H1 (cell line): ENCODE measurements at regions of chr3 and their contacts with region 1.

Region 1: DNA sequence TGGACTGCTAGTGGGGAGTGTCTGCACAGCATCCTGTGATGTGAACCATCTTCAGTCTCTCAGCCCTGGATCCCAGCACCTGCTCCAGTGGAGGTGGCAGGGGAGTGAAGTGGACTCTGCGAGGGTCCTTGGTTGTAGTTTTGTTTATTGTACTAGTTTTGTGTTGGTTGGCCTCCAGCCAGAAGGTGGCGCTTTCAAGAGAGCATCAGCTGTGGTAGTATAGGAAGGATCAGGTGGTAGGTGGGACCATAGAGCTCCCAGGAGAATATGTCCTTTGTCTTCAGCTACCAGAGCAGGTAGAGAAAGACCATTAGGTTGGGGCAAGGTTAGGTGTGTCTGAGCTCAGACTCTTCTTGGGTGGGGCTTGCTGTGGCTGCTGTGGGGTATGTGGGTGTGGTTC is 20.9 kb downstream of the NEK11 start:
- DNase-seq: peak in 1 of 2 experiments; percentile 57
- H3K4me3 ChIP-seq: no peak overlapping the region
- H3K27ac ChIP-seq: no peak overlapping the region
- H3K4me1 ChIP-seq: peaks cover 0 to 1% (median 0%) of the 10 kb centered on the region in 4 experiments; a peak in 1 of 7 replicates
- H3K27me3 ChIP-seq: no peaks in the 10 kb centered on the region
- CTCF ChIP-seq: peak in 2 of 3 experiments; percentile 18 to 52; a peak in 2 of 4 replicates
- EP300 ChIP-seq: no peak
- POLR2A ChIP-seq: no peak
- RAD21 ChIP-seq: no peak; a peak in 1 of 4 replicates

Region 2: GRCh38 chr3:131033480-131034080 is 14.0 kb before region 1 on chr3:
- CTCF ChIA-PET with region 1: interaction called, 12 read pairs
- POLR2A ChIA-PET with region 1: no interaction called
- DNase-seq: no peak
- H3K4me3 ChIP-seq: no peak overlapping the region
- H3K27ac ChIP-seq: no peak overlapping the region
- H3K4me1 ChIP-seq: no peaks in the 10 kb centered on the region
- H3K27me3 ChIP-seq: no peaks in the 10 kb centered on the region
- CTCF ChIP-seq: peak in 2 of 3 experiments; percentile 25 to 59; a peak in 2 of 4 replicates
- EP300 ChIP-seq: no peak
- POLR2A ChIP-seq: no peak
- RAD21 ChIP-seq: peak; percentile 67 to 77

Region 3: DNA sequence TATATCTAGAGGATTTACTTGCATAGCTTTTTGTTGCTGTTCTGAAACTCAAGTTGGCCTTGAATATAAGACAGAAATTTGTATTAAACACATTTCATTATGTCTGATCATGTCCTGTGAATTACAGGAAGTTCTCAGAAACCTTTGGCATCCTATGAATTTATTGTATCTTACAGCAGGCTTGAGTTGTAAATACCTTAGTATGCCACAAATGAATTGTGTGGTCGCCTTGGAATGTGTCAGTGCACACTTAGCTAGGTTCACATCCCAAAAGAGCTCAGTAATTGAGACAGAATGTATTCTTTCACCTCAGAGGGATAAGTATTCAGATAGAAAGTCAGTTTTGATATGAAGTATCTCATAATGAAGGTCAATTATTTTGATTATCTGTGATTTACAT is 62.5 kb after region 1 on chr3:
- CTCF ChIA-PET with region 1: no interaction called
- POLR2A ChIA-PET with region 1: no interaction called
- DNase-seq: no peak
- H3K4me3 ChIP-seq: no peak overlapping the region
- H3K27ac ChIP-seq: no peak overlapping the region
- H3K4me1 ChIP-seq: no peaks in the 10 kb centered on the region
- H3K27me3 ChIP-seq: peaks cover 0 to 1% (median 0%) of the 10 kb centered on the region in 4 experiments; a peak in 1 of 7 replicates
- CTCF ChIP-seq: no peak
- EP300 ChIP-seq: no peak
- POLR2A ChIP-seq: no peak
- RAD21 ChIP-seq: no peak